ENCODE measurements at regions of chr13 and their contacts with region 1.

Region 1: GRCh38 chr13:47250146-47250545 is 353.3 kb upstream of the HTR2A start:
- DNase-seq: peak in 1 of 2 donors; percentile 61
- ATAC-seq: peak; percentile 73
- H3K4me3 ChIP-seq: no peak overlapping the region
- H3K27ac ChIP-seq: no peak overlapping the region
- H3K4me1 ChIP-seq: peaks cover 3 to 7% of the 10 kb centered on the region in 2 donors
- H3K27me3 ChIP-seq: no peaks in the 10 kb centered on the region

Region 2: DNA sequence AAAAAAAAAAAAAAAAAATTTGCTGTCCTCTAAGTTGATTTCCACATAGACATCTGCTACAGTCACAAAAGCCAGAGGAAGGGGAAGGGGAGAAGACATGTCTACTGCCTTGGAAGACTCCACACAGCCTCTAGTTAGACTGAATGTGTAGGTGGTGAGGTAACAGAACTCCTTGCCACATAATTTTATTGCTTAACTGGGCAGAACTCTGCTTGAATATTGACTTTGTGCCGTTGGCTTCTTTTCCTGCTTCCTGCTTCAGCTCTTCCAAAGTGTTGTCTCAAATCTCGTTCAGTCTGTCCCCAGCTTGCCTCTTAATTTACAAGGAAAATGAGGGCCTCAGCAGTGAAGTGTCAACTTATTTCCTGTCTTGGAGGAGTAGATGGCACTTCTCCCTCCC is 490.3 kb before region 1 on chr13:
- intact Hi-C with region 1: loop called in 1 of 2 experiments (anchors 5 kb)
- DNase-seq: no peak
- ATAC-seq: peak; percentile 48
- H3K4me3 ChIP-seq: no peak overlapping the region
- H3K27ac ChIP-seq: peak overlapping the region; percentile 62 to 82
- H3K4me1 ChIP-seq: peaks cover 2 to 6% of the 10 kb centered on the region in 2 donors
- H3K27me3 ChIP-seq: no peaks in the 10 kb centered on the region

Region 3: DNA sequence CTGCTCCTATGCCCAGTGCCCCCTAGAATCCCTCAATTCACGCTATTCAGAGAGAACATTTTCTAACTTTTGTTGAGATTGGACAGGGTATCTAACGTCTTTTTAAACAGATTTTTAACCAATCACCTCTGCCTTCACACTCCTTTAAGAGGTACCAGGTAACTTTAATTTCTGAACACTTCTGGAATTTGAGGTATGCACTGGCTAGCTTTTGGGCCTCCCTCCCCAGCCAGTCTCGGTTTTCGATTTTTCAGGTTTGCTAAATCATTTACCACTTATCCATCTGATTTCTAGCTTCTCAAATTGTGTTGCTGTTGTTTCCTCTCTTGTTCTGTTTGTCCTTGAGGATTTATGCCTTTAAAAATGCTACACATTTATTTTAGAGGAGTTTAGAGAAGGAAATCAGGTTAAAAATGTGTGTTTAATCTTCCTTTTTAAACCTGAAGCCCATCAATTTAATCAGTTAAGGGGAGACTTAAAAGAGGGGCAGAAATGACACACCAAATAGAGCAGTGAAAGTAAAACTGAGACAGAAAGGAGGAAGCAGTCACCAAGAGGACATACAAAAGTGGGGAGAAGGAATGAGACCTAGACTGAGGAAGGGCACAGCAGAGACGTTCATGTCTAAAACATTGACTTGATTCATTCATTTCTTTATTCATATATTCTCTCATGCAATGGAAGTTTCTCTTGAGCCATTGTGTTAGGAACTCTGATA is 213.7 kb before region 1 on chr13:
- intact Hi-C with region 1: no loop called
- DNase-seq: no peak
- ATAC-seq: no peak
- H3K4me3 ChIP-seq: no peak overlapping the region
- H3K27ac ChIP-seq: no peak overlapping the region
- H3K4me1 ChIP-seq: no peaks in the 10 kb centered on the region
- H3K27me3 ChIP-seq: no peaks in the 10 kb centered on the region

Region 4: GRCh38 chr13:47094734-47095434 is 155.3 kb before region 1 on chr13:
- intact Hi-C with region 1: loop called in 1 of 2 experiments (anchors 5 kb)
- DNase-seq: no peak
- ATAC-seq: no peak
- H3K4me3 ChIP-seq: no peak overlapping the region
- H3K27ac ChIP-seq: no peak overlapping the region
- H3K4me1 ChIP-seq: no peaks in the 10 kb centered on the region
- H3K27me3 ChIP-seq: no peaks in the 10 kb centered on the region

Region 5: DNA sequence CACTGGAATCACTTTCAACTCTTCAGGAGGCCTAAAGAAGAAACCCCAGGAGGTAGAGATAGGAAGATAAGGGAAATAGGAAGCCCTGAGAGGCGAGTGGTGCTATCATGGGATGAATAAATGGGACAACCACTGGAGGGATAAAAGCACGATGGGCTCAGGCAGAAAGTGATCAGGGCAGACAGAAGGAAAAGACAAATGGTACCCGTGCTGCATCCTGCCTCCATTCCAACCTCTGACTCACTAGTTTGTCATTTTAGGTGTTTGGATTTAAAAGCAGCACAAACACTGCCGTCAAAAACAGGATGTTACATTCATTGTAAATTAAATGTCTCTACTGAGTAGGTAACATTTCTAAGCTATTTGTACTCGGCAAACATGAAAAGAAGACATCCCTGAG is 39.0 kb before region 1 on chr13:
- intact Hi-C with region 1: no loop called
- DNase-seq: no peak
- ATAC-seq: no peak
- H3K4me3 ChIP-seq: no peak overlapping the region
- H3K27ac ChIP-seq: no peak overlapping the region
- H3K4me1 ChIP-seq: no peaks in the 10 kb centered on the region
- H3K27me3 ChIP-seq: no peaks in the 10 kb centered on the region

Region 6: GRCh38 chr13:47306991-47307390 is 56.8 kb after region 1 on chr13:
- intact Hi-C with region 1: no loop called
- DNase-seq: no peak
- ATAC-seq: no peak
- H3K4me3 ChIP-seq: no peak overlapping the region
- H3K27ac ChIP-seq: no peak overlapping the region
- H3K4me1 ChIP-seq: no peaks in the 10 kb centered on the region
- H3K27me3 ChIP-seq: no peaks in the 10 kb centered on the region

Region 7: GRCh38 chr13:47334173-47334572 is 84.0 kb after region 1 on chr13:
- intact Hi-C with region 1: loop called in 1 of 2 experiments (anchors 2 kb)
- DNase-seq: no peak
- ATAC-seq: peak; percentile 39
- H3K4me3 ChIP-seq: no peak overlapping the region
- H3K27ac ChIP-seq: no peak overlapping the region
- H3K4me1 ChIP-seq: peaks cover 2% of the 10 kb centered on the region in 2 donors
- H3K27me3 ChIP-seq: no peaks in the 10 kb centered on the region